ENCODE measurements at regions of chr11 and their contacts with region 1.

Region 1: GRCh38 chr11:124953753-124954589 is at the start of gene CCDC15:
- DNase-seq: peak; percentile 97
- H3K4me3 Mint-ChIP-seq: no peak within 1 kb of the TSS
- H3K27ac Mint-ChIP-seq: no peak within 1 kb of the TSS
- H3K4me1 Mint-ChIP-seq: peaks cover 8% of the 10 kb centered on the region
- H3K27me3 Mint-ChIP-seq: no peaks in the 10 kb centered on the region
- total RNA-seq, gene CCDC15: 5.6 to 6.4 TPM

Region 2: DNA sequence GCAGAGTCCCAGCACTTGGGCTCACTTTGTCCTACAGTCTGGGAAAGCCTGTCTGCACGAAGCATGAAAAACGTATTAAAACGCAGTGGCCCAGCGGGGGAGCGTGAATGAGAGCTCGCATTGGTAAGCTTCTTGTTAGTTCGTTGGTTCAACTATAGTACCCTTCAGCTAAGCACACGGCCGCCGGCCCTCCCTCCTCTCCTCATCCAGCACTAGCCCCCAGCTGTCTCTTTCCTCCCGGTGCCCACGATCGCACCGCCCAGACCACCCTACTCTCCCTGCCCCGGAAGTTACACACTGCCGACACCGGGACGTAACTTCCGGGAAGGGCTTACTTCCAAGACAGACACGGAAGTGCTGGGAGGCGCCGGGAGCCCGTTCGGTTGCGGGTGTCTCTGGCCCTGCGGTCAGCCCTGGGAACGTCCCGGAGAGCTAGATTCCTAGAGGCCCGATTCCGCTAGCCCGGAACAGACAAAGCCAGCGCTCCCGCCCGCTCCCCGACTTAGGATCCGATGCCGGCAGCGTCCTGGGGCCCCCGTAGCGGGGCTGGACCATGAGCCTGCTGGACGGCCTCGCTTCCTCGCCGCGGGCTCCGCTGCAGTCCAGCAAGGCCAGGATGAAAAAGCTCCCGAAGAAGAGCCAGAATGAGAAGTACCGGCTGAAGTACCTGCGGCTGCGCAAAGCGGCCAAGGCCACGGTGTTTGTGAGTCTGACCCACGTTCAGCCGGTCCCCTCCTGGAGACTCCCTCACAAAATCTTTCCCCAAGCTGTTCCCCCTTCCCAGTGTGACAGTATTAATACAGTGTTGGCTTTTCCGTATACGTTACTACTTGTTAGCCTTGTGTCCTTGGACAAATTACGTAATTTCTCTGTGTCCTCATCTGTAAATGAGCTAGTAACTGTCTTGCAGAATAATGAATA is 331.2 kb before region 1 on chr11 and contains the start of gene TBRG1:
- CTCF ChIA-PET with region 1: no interaction called
- POLR2A ChIA-PET with region 1: no interaction called
- intact Hi-C with region 1: loop called (anchors 5 kb)
- DNase-seq: peak; percentile 87
- H3K4me3 Mint-ChIP-seq: peak within 1 kb of the TSS; percentile 85
- H3K27ac Mint-ChIP-seq: peak within 1 kb of the TSS; percentile 93
- H3K4me1 Mint-ChIP-seq: peaks cover 28% of the 10 kb centered on the region
- H3K27me3 Mint-ChIP-seq: peaks cover 2% of the 10 kb centered on the region
- total RNA-seq, gene TBRG1: 33.5 to 34.5 TPM

Region 3: DNA sequence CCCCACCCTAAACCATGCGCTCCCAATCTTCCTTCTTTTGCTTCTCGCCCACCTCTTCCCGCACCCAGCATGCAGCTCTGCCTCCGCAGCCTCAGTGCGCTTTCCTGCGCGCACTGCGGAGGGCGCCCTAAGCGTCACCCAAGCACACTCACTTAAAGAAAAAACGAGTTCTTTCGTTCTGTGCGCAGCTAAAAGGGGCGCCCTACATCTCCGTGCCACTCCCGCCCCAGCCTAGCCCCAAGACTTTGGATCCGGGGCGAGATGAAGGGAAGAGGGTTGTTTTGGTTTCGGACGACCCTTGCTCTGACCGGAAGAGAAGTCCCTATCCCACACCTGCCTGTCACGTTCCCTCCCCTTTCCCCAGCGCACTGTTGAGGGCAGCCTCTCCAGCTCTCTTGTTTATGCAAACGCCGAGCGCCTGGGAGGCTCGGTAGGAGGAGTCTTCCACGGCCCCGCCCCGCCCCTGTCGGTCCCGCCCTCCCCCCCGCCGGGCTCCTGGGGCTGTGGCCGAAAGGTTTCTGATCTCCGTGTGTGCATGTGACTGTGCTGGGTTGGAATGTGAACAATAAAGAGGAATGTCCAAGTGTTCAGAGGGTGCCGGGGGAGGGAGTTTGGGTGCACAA is 207.2 kb before region 1 on chr11:
- CTCF ChIA-PET with region 1: no interaction called
- POLR2A ChIA-PET with region 1: no interaction called
- intact Hi-C with region 1: loop called (anchors 5 kb)
- DNase-seq: peak; percentile 85
- H3K4me3 Mint-ChIP-seq: peak overlapping the region; percentile 87
- H3K27ac Mint-ChIP-seq: peak overlapping the region; percentile 89
- H3K4me1 Mint-ChIP-seq: peaks cover 6% of the 10 kb centered on the region
- H3K27me3 Mint-ChIP-seq: no peaks in the 10 kb centered on the region

Region 4: DNA sequence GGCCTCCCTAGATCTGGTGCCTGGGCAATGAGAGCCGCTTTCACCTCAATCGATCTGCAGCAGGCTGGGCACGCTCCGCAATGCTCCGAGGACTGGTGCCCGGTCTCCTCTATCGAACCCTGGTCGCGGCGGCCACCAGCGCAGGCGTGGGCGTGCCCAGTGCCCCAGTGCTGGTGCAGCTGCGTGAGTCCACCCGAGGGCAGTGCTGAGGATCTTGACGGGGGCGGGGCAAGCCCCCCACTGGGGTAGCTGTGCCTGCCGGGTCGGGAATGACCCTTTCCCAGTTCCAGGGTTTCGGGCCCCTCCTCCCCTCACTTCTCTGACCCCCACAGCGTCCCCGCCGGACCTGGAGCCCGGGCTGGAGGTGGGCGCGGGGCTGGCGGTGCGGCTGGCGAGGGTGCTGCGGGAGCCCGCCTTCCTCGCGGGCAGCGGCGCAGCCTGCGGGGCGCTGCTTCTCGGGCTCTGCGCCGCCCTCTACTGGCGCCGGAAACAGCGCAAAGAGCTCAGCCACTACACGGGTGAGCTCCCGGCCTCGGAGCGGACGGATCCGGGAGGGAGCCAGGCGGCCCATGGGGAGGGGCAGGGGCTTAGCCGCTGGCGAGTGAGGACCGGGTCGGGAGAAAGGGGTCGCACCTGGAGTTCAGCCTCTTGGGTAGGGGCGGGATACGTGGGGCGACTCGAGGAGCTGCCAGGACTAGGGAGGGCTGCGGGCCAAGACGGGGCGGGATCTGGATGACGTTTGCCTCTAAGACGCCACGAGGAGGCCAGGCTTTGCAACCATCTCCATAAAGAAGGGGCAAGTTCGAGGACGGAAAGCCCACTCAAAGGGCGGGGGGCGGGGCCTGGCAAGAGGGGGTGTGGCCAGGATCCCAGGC is 77.8 kb before region 1 on chr11:
- CTCF ChIA-PET with region 1: interaction called, 21 read pairs
- POLR2A ChIA-PET with region 1: interaction called, 5 read pairs
- intact Hi-C with region 1: loop called (anchors 1 kb)
- DNase-seq: peak; percentile 85
- H3K4me3 Mint-ChIP-seq: peak overlapping the region; percentile 77
- H3K27ac Mint-ChIP-seq: peak overlapping the region; percentile 61
- H3K4me1 Mint-ChIP-seq: peaks cover 13% of the 10 kb centered on the region
- H3K27me3 Mint-ChIP-seq: peaks cover 15% of the 10 kb centered on the region

Region 5: DNA sequence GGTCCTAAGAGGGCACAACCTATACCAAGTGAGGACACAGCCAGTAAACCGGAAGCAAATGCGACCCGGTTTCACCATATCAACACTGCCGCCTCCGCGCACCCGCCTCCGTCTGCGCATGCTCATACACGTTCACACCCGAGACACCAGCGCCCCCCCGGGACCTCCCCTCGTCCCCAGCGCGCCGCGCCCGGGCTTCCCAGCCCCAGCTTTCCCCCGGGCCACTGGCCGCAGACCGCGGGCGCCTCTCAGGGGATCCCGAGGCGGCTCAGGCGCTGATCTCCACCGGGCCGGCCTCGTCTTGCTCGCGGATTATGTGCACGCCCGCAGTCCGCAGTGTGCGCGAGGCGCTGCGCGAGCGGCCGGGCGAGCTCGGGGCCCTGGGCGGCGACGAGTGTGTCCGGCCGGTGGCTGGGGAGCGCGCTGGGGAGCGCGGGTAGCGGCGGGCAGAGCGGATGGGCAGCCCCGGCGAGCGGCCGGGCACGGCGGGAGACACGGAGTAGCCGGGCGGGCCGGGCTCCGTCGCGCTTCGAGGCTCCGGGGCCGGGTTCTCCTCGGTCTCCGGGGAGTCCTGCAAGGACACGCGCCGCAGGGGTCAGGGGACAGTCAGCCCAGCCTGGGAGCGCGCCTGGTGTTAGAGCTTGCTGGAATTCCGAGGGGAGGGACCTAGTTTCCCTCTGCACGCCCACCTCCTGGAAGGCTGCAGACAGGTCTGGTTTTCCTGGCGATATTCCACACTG is 32.9 kb before region 1 on chr11:
- CTCF ChIA-PET with region 1: no interaction called
- POLR2A ChIA-PET with region 1: no interaction called
- intact Hi-C with region 1: loop called (anchors 2 kb)
- DNase-seq: peak; percentile 80
- H3K4me3 Mint-ChIP-seq: peak overlapping the region; percentile 51
- H3K27ac Mint-ChIP-seq: peak overlapping the region; percentile 43
- H3K4me1 Mint-ChIP-seq: peaks cover 11% of the 10 kb centered on the region
- H3K27me3 Mint-ChIP-seq: no peaks in the 10 kb centered on the region

Region 6: DNA sequence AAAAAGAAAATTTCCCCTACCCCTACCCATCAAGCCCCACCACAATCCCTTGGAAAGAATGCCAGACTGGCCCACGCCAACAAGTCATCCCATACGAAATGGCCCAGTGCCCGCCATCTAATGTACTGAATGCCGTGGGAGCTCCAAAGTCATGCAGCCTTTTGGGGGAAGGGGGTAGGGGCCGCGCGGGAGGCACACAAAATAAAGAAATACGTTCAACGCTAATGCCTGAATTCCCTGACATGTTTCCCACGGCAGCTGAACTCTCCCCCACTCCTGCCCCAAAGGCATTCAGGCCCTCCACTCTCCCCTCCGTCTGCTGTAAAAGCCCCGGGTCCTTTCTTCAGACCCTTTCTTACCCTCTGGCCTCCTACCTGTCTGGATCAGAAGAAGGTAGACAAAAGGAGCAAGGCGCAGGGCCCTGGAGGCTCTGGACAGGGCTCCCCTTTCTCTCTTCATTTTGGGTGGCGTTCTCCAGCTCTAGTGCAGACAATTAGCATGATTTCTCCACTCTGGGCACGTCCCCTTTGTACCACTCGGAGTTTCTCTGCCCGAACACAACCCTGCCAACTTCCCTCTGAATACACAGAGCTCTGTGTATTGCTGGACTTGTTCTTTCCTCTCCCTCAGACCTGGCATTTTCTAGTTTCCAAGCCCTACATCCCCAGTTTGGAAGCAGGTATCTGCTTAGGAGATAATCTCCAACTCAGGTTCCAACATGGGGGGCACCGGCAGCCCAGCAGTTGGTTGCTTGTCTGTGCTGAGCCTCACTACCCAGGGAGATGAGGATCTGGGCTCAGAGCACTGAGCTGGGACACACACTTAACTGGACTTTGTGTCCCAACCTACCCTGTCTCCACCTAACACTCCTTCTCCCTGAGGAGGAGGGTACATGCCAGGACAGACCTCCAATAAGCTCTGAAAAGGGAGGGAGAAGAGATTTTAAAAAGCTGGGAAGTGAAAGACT is 18.1 kb before region 1 on chr11 and contains the start of gene HEPACAM:
- CTCF ChIA-PET with region 1: no interaction called
- POLR2A ChIA-PET with region 1: no interaction called
- intact Hi-C with region 1: no loop called
- DNase-seq: no peak
- H3K4me3 Mint-ChIP-seq: no peak within 1 kb of the TSS
- H3K27ac Mint-ChIP-seq: no peak within 1 kb of the TSS
- H3K4me1 Mint-ChIP-seq: no peaks in the 10 kb centered on the region
- H3K27me3 Mint-ChIP-seq: no peaks in the 10 kb centered on the region
- total RNA-seq, gene HEPACAM: not detected

Region 7: DNA sequence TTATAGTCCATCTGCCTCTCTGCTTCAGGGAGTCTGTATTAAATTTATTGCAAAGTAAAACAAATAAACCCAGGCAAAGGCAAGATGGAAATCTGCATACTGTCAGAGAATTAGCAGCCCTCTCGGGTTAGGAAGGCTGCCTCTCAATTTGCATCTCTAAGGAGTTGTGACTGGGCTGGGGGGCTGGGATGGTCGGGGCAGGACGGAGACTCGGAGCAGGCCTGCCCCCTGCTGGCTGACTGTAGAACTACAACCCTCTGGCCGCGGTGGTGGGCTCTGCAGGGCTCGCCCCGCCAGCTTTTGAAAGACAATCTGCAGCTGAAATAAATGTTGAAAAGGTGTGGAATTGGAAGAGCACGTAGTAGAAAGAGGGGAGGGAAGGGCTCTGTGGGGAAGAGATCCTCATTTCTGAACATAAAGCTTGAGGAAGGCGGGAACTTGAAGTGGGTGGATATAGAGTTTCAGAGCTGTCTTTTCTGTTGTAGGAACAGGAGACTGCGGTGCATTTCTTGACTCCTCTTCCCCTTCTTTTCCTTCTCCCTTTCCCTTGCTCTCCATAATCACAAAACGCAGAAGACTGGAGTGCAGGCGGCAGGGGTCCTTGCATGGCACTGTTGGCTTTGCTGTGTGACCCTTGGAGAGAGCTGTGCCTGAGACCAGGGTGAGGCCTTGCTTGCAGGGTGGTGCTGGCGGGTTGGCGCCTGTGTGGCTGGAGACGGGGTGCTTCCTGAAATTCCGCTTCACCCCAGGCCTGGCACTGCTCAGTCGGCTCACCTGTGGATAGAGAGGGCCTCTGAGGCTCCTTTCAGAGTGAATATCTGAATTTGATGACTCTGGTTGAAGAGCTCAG is 187.9 kb after region 1 on chr11:
- CTCF ChIA-PET with region 1: interaction called, 66 read pairs
- POLR2A ChIA-PET with region 1: no interaction called
- intact Hi-C with region 1: no loop called
- DNase-seq: peak; percentile 62
- H3K4me3 Mint-ChIP-seq: no peak overlapping the region
- H3K27ac Mint-ChIP-seq: no peak overlapping the region
- H3K4me1 Mint-ChIP-seq: peaks cover 4% of the 10 kb centered on the region
- H3K27me3 Mint-ChIP-seq: peaks cover 21% of the 10 kb centered on the region

Region 8: DNA sequence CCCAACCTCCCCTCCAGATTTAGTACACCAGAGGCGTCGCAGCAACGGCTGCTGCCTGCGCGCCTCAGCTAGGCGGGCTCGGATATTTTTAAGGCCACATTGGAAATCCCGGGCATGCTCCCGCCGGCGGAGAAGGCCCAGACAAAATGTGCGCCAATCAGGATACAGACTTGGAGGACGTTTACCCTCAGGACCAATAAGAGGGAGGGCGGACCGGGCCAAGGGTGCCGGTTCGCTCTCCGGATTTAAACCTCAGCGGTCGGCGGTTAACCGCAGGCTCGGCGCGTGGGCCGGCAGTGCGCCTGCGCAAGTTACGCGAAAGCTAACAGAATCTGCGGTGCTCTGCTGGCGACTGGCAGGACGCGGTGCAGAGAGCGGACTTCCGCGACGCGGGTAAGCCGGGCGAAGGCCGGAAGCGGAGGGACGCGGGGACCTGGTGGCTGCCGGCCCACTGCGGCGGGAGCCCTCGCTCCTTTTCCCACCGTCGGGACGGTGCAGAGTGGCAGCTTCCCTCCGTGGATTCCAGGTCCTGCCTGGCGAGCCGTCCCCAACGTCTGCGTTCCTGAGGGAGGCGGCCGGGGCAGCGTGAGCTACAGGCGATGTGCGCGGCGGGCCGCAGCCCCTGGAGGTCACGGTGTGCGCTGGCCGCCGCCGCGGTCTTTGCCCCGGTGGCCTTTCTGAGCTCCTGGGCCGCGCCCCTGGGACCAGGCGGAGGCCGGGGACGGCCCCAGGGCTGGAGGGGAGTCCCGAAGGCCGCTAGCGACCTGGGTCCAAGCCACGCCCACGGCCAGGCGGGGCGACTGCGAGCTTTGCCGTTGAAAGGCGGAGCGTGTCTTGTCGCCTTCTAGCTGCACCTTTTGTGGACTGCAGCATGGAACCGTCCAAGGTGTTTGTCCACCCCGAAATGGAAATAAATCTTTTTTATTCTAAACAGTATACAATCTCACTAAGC is 933.7 kb after region 1 on chr11 and contains the start of gene HYLS1:
- CTCF ChIA-PET with region 1: no interaction called
- POLR2A ChIA-PET with region 1: no interaction called
- intact Hi-C with region 1: loop called (anchors 10 kb)
- DNase-seq: peak; percentile 99
- H3K4me3 Mint-ChIP-seq: peak within 1 kb of the TSS; percentile 74
- H3K27ac Mint-ChIP-seq: peak within 1 kb of the TSS; percentile 93
- H3K4me1 Mint-ChIP-seq: peaks cover 31% of the 10 kb centered on the region
- H3K27me3 Mint-ChIP-seq: peaks cover 6% of the 10 kb centered on the region
- total RNA-seq, gene HYLS1: 8.2 to 8.3 TPM